Activated T-helper 1 cell treated with anti-CD3 and anti-CD28 coated beads, Interleukin-12 subunit alpha, Interleukin-12 subunit beta, Interleukin-2, Interleukin-4 antibody, amounts not matched to agents 30 ng/mL and 10 ng/mL and 1 ng/mL, durations not matched to agents 14 hours and 24 hours and 36 hours (primary cell): ENCODE measurements at regions of chr1 and their contacts with region 1.

Region 1: DNA sequence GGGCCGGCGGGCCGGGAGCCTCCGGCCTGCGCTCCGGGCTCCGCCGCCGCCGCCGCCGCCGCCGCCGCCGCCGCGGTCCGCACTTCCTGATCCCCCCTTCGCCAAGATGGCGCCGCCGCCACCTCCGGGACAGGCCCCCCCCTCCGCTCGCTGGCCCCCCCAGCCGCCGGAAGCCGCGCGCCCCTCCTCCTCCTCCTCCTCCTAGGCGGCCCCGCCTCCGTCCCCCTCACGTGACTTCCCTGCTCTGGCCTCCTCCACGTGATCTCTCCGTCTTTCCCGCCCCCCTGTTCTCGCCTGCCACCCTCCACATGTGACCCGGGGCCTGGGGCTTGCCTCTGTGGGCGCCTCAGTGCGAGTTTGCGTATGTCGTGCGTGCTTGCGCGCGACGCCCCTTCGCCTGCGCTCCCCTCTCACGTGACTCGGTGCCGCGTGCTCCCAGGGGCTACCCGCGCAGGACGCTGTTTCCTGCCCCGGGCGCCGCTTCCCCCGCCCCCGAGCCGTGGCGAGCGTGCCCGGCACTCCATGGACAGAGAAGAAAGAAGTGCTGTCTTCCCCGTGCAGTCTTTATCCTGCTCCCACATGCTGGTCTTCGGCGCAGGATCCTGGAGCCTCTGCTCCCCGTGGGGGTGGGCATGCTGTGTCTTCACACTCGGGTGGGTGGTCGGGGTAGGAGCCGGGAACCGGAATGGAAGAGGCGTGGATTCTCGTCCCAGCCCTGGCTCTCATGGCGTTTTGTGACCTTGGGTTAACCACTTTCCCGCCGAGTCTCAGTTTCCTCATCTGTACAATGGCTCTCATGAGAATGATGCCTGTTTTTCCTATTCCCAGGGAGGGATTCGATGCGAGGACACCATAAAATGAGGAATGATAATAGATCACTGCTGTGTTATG is at the start of gene UBE2Q1:
- DNase-seq: peak; percentile 99
- H3K4me3 Mint-ChIP-seq: peak within 1 kb of the TSS; percentile 96
- H3K27ac Mint-ChIP-seq: peak within 1 kb of the TSS; percentile 92
- H3K4me1 Mint-ChIP-seq: peaks cover 49% of the 10 kb centered on the region
- H3K27me3 Mint-ChIP-seq: no peaks in the 10 kb centered on the region
- total RNA-seq, gene UBE2Q1: 93.3 and 106 TPM in 2 replicates

Region 2: GRCh38 chr1:154404984-154405761 is 153.6 kb before region 1 on chr1 and contains the start of gene IL6R:
- intact Hi-C with region 1: loop called (anchors 5 kb)
- DNase-seq: peak; percentile 62
- H3K4me3 Mint-ChIP-seq: peak within 1 kb of the TSS; percentile 86
- H3K27ac Mint-ChIP-seq: peak within 1 kb of the TSS; percentile 77
- H3K4me1 Mint-ChIP-seq: peaks cover 73% of the 10 kb centered on the region
- H3K27me3 Mint-ChIP-seq: no peaks in the 10 kb centered on the region
- total RNA-seq, gene IL6R: 4.9 and 5.0 TPM in 2 replicates

Region 3: DNA sequence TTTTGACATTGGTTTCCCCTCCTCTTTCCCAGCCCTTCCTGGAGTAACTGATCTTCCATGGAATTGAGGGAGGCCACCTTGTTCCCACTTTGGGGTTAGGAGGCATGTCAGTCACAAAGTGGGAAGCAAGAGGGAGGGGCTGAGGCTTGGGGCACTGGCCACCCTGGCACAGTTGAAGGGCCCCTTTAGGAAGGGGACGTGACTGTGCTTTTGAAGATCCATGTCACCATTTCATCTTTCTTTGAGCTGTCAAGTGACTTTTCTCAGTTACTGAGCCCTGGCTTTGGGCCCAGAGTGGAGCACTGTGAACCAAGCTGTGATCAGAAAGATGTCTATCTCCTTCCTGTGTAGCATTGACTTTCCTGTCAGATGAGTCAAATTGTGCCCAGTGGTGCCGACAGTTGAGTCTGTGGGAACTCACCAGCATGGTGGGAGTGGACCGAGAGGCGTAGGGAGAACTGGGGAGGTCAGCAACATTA is 95.3 kb before region 1 on chr1:
- intact Hi-C with region 1: no loop called
- DNase-seq: peak; percentile 67
- H3K4me3 Mint-ChIP-seq: peak overlapping the region; percentile 58
- H3K27ac Mint-ChIP-seq: peak overlapping the region; percentile 81
- H3K4me1 Mint-ChIP-seq: peaks cover 65% of the 10 kb centered on the region
- H3K27me3 Mint-ChIP-seq: peaks cover 3% of the 10 kb centered on the region

Region 4: GRCh38 chr1:154669464-154670282 is 110.9 kb after region 1 on chr1:
- intact Hi-C with region 1: loop called (anchors 1 kb)
- DNase-seq: peak; percentile 64
- H3K4me3 Mint-ChIP-seq: no peak overlapping the region
- H3K27ac Mint-ChIP-seq: no peak overlapping the region
- H3K4me1 Mint-ChIP-seq: peaks cover 17% of the 10 kb centered on the region
- H3K27me3 Mint-ChIP-seq: peaks cover 2% of the 10 kb centered on the region

Region 5: DNA sequence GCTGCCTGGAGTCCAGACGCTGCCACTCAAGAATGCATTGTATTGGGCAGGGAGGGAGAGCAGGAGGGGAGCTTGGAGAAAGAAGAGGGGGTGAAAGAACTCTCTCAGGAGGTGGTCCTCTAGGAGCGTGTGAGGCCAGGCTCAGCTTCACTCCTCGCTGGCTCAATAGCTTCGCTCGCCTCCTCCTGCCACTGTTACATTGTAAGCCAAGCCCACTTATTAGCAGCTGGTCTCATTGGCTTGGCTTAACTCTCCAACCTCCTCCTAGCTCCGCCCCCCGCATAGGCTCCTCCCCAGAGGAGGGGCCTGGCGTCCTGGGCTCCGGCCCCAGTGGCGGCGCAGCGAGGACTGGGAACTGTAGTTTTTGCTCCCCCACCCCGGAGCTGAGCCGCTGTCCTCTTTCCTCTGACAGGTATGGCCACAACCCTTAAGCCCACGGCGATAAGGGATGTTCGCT is 311.3 kb after region 1 on chr1 and contains the start of gene KCNN3:
- intact Hi-C with region 1: loop called (anchors 2 kb)
- DNase-seq: peak; percentile 71
- H3K4me3 Mint-ChIP-seq: peak within 1 kb of the TSS; percentile 3
- H3K27ac Mint-ChIP-seq: no peak within 1 kb of the TSS
- H3K4me1 Mint-ChIP-seq: peaks cover 47% of the 10 kb centered on the region
- H3K27me3 Mint-ChIP-seq: peaks cover 24% of the 10 kb centered on the region
- total RNA-seq, gene KCNN3: 0.34 and 0.36 TPM in 2 replicates

Region 6: GRCh38 chr1:154955718-154956543 is 397.1 kb after region 1 on chr1 and contains the start of gene PBXIP1:
- intact Hi-C with region 1: loop called (anchors 2 kb)
- DNase-seq: peak; percentile 86
- H3K4me3 Mint-ChIP-seq: peak within 1 kb of the TSS; percentile 94
- H3K27ac Mint-ChIP-seq: peak within 1 kb of the TSS; percentile 100
- H3K4me1 Mint-ChIP-seq: peaks cover 65% of the 10 kb centered on the region
- H3K27me3 Mint-ChIP-seq: peaks cover 2% of the 10 kb centered on the region
- total RNA-seq, gene PBXIP1: 25.1 and 27.9 TPM in 2 replicates

Region 7: GRCh38 chr1:155001675-155002463 is 443.0 kb after region 1 on chr1:
- intact Hi-C with region 1: loop called (anchors 1 kb)
- DNase-seq: peak; percentile 98
- H3K4me3 Mint-ChIP-seq: peak overlapping the region; percentile 98
- H3K27ac Mint-ChIP-seq: peak overlapping the region; percentile 97
- H3K4me1 Mint-ChIP-seq: peaks cover 55% of the 10 kb centered on the region
- H3K27me3 Mint-ChIP-seq: peaks cover 2% of the 10 kb centered on the region

Region 8: DNA sequence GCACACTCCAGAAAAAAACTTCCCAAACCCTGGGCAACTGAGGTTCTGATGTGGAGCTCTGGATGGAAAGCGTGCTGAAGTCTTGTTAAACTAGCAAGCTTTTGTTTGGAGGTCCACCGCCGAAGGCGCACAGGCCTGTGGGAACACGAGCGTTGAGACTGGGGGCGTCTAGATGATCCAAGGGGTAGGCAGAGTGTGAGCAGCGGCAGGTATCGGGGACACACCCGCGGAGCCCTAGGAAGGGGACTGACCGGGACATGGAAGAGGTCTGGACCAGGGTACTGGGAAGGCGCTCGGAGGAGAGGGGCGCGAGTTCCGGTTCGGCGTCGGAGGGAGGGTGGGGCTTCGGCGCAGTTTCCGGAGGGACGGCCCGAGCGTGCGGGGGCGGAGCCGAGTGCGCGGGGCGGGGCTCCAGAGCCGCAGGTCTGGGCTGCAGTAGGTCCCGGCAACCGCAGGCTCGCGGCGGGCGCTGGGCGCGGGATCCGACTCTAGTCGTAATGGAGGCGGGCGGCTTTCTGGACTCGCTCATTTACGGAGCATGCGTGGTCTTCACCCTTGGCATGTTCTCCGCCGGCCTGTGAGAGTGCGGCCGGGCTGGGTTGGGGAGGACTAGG is 576.7 kb after region 1 on chr1 and contains the start of gene SLC50A1:
- intact Hi-C with region 1: loop called (anchors 1 kb)
- DNase-seq: peak; percentile 91
- H3K4me3 Mint-ChIP-seq: peak within 1 kb of the TSS; percentile 94
- H3K27ac Mint-ChIP-seq: peak within 1 kb of the TSS; percentile 99
- H3K4me1 Mint-ChIP-seq: peaks cover 42% of the 10 kb centered on the region
- H3K27me3 Mint-ChIP-seq: peaks cover 5% of the 10 kb centered on the region
- total RNA-seq, gene SLC50A1: 45.7 and 47.7 TPM in 2 replicates